ENCODE measurements at regions of chr19 and their contacts with region 1.

Region 1: GRCh38 chr19:18846862-18847548 is 15.2 kb downstream of the UPF1 start:
- DNase-seq: peak; percentile 82
- H3K4me3 ChIP-seq: no peak overlapping the region
- H3K27ac ChIP-seq: peak overlapping the region; percentile 68
- H3K4me1 ChIP-seq: peaks cover 29% of the 10 kb centered on the region
- H3K27me3 ChIP-seq: no peaks in the 10 kb centered on the region
- CTCF ChIP-seq: peak; percentile 87

Region 2: DNA sequence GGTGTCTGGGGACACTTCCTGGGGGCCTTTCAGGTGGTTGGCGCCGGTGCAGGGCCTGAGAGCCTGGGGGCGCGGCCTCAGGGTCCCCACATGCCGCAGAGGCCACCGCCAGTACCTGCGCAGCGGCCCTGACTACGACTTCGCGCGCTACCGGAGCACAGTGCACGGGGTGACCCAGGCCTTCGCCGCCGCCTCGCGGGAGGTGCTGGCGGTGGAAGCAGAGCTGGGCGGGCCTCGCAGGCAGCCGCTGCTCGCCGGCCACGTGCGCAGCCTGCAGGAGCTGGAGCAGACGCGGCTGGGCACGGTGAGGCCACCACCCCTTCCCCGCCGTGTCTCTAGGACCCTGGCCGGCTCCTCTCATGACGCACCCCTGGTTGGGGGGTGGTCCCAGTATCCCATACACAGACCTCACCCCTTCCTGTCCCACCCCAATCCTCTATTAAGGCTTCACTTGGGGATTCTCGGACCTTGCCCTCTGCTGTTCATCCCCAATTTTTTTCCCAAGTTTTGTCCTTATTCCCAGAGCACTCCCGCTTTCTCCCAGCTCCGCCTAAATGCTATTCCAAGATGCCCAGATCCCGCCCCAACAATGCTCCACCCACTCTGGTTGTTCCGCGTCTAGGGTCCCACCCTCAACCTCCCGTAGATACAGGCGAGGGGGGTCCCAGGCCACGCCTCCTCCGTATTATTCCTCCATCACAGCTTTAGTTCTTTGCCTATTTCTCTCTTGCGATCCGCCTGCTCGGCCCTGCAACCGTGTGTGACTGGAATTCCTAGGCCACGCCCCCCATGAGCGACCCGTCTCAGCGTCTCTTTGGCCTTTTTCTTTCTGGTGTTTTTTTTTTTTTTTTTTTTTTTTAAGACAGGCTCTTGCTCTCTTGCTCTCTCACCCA is 257.4 kb before region 1 on chr19:
- CTCF ChIA-PET with region 1: interaction called, 7 read pairs
- POLR2A ChIA-PET with region 1: interaction called, 3 read pairs
- intact Hi-C with region 1: loop called (anchors 5 kb)
- DNase-seq: peak; percentile 93
- H3K4me3 ChIP-seq: peak overlapping the region; percentile 83
- H3K27ac ChIP-seq: peak overlapping the region; percentile 96
- H3K4me1 ChIP-seq: peaks cover 40% of the 10 kb centered on the region
- H3K27me3 ChIP-seq: no peaks in the 10 kb centered on the region
- CTCF ChIP-seq: no peak

Region 3: GRCh38 chr19:18700501-18701249 is 146.3 kb before region 1 on chr19:
- CTCF ChIA-PET with region 1: no interaction called
- POLR2A ChIA-PET with region 1: no interaction called
- intact Hi-C with region 1: no loop called
- DNase-seq: peak; percentile 94
- H3K4me3 ChIP-seq: peak overlapping the region; percentile 34
- H3K27ac ChIP-seq: no peak overlapping the region
- H3K4me1 ChIP-seq: peaks cover 22% of the 10 kb centered on the region
- H3K27me3 ChIP-seq: no peaks in the 10 kb centered on the region
- CTCF ChIP-seq: no peak

Region 4: GRCh38 chr19:18733196-18733647 is 113.8 kb before region 1 on chr19:
- CTCF ChIA-PET with region 1: no interaction called
- POLR2A ChIA-PET with region 1: no interaction called
- intact Hi-C with region 1: no loop called
- DNase-seq: peak; percentile 46
- H3K4me3 ChIP-seq: no peak overlapping the region
- H3K27ac ChIP-seq: peak overlapping the region; percentile 75
- H3K4me1 ChIP-seq: peaks cover 57% of the 10 kb centered on the region
- H3K27me3 ChIP-seq: no peaks in the 10 kb centered on the region
- CTCF ChIP-seq: no peak

Region 5: GRCh38 chr19:18771328-18772242 is 75.4 kb before region 1 on chr19:
- CTCF ChIA-PET with region 1: no interaction called
- POLR2A ChIA-PET with region 1: no interaction called
- intact Hi-C with region 1: loop called (anchors 5 kb)
- DNase-seq: peak; percentile 54
- H3K4me3 ChIP-seq: no peak overlapping the region
- H3K27ac ChIP-seq: no peak overlapping the region
- H3K4me1 ChIP-seq: no peaks in the 10 kb centered on the region
- H3K27me3 ChIP-seq: no peaks in the 10 kb centered on the region
- CTCF ChIP-seq: peak; percentile 65

Region 6: GRCh38 chr19:18809150-18809868 is 37.7 kb before region 1 on chr19:
- CTCF ChIA-PET with region 1: no interaction called
- POLR2A ChIA-PET with region 1: no interaction called
- intact Hi-C with region 1: no loop called
- DNase-seq: peak; percentile 43
- H3K4me3 ChIP-seq: no peak overlapping the region
- H3K27ac ChIP-seq: no peak overlapping the region
- H3K4me1 ChIP-seq: no peaks in the 10 kb centered on the region
- H3K27me3 ChIP-seq: no peaks in the 10 kb centered on the region
- CTCF ChIP-seq: no peak

Region 7: GRCh38 chr19:18878858-18879578 is 32.0 kb after region 1 on chr19:
- CTCF ChIA-PET with region 1: no interaction called
- POLR2A ChIA-PET with region 1: no interaction called
- intact Hi-C with region 1: no loop called
- DNase-seq: no peak
- H3K4me3 ChIP-seq: no peak overlapping the region
- H3K27ac ChIP-seq: no peak overlapping the region
- H3K4me1 ChIP-seq: no peaks in the 10 kb centered on the region
- H3K27me3 ChIP-seq: no peaks in the 10 kb centered on the region
- CTCF ChIP-seq: no peak

Region 8: GRCh38 chr19:18903156-18904037 is 56.4 kb after region 1 on chr19:
- CTCF ChIA-PET with region 1: interaction called, 3 read pairs
- POLR2A ChIA-PET with region 1: interaction called, 12 read pairs
- intact Hi-C with region 1: no loop called
- DNase-seq: no peak
- H3K4me3 ChIP-seq: no peak overlapping the region
- H3K27ac ChIP-seq: no peak overlapping the region
- H3K4me1 ChIP-seq: no peaks in the 10 kb centered on the region
- H3K27me3 ChIP-seq: no peaks in the 10 kb centered on the region
- CTCF ChIP-seq: 0 out of 2 replicates have a peak, but pooled peaks have one; percentile 7

Measured in A673 (cell line).